Activated T-helper 2 cell treated with anti-CD3 and anti-CD28 coated beads, Interferon-gamma antibody, Interleukin-2, Interleukin-4, amounts not matched to agents 10 μg/mL and 5 μg/mL and 100 μg/mL, durations not matched to agents 14 hours and 24 hours and 36 hours (primary cell): ENCODE measurements at regions of chr5 and their contacts with region 1.

Region 1: DNA sequence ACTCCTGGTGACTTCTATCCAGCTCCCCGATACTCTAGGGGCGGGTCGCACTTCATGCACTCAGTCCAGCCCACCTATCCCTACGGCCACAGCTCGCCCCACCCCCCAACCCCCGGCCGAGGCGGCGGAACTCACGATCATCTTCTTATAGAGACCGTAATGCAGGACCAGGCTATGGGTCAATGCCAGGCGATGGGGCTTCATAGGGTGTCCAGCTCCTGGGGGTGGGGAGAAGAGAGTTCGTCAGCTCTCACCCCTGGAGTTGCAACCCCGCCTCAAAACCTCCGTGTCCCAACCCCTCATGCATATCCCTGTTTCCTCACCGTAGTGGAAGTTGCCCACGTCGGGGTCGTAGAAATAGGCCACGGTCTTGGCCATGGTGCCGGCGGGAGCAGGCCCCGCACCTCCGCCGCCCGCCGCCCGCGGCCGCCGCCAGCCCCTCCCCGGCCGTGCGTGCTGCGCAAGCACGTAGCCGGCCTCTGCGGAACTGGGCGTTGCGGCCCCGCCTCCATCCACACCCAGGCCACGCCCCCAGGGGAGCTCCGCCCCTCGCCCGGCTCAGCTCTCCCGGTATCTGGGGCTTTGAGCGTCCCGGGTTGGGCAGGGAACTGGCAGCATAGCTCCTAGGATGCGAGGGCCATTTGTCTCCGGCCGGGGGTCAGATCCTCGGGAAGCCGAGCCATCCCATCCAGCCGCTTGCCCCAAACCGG is at the starts of genes HDAC3 and RELL2:
- DNase-seq: peak; percentile 93
- H3K4me3 Mint-ChIP-seq: peak within 1 kb of the TSS; percentile 88
- H3K27ac Mint-ChIP-seq: peak within 1 kb of the TSS; percentile 81
- H3K4me1 Mint-ChIP-seq: peaks cover 37% of the 10 kb centered on the region
- H3K27me3 Mint-ChIP-seq: no peaks in the 10 kb centered on the region
- total RNA-seq, gene HDAC3: 92.4 and 95.2 TPM in 2 replicates
- total RNA-seq, gene RELL2: 15.9 and 16.1 TPM in 2 replicates

Region 2: GRCh38 chr5:141597394-141597793 is 39.2 kb before region 1 on chr5:
- intact Hi-C with region 1: loop called (anchors 1 kb)
- DNase-seq: no peak
- H3K4me3 Mint-ChIP-seq: no peak overlapping the region
- H3K27ac Mint-ChIP-seq: no peak overlapping the region
- H3K4me1 Mint-ChIP-seq: peaks cover 54% of the 10 kb centered on the region
- H3K27me3 Mint-ChIP-seq: no peaks in the 10 kb centered on the region

Region 3: DNA sequence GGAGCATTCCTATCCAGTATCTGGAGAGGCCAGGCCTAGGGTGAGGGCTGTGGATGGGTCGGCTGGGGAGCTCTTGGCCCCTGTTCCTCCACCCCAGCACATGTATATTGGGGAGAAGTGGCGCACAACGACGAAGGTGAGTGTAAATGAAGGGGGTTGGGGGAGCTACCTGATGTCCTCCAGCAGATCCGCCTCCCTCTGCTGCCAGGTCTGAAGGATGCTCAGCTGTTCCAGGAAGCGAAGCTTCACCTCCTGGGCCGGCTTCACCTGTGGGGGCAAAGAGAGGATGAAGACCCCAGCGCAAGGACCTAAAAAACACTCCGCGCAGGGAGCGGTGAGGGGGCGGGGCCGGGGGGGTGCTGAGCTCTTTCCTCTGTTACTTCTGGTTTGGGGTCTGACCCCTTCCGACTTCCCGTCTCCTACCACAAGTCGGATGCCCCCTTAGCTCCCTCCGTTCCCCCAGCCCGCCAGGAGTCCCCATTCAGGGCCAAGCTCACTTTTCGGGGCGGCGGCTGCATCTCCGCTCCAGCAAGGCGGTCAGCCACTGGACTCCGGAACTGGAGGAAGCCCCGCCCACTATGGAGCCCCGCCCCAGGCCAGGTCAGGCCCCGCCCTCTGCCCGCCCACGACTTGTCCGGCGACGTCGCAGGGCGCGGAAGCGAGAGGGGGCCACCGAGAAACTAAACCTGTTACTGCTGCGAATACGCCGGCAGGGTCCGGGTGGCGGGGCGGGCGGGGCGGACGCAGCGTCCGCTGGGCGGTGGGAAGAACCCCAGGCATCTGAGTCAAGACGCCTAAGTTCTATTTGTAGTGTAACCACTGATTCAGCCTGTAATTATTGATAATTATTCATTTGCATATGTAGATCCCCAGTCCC is 14.5 kb after region 1 on chr5 and contains the start of gene FCHSD1:
- intact Hi-C with region 1: loop called (anchors 1 kb)
- DNase-seq: peak; percentile 76
- H3K4me3 Mint-ChIP-seq: peak within 1 kb of the TSS; percentile 98
- H3K27ac Mint-ChIP-seq: peak within 1 kb of the TSS; percentile 94
- H3K4me1 Mint-ChIP-seq: peaks cover 11% of the 10 kb centered on the region
- H3K27me3 Mint-ChIP-seq: no peaks in the 10 kb centered on the region
- total RNA-seq, gene FCHSD1: 37.4 and 42.8 TPM in 2 replicates

Region 4: GRCh38 chr5:141681695-141682641 is 45.4 kb after region 1 on chr5 and contains the start of gene ARAP3:
- intact Hi-C with region 1: no loop called
- DNase-seq: no peak
- H3K4me3 Mint-ChIP-seq: peak within 1 kb of the TSS; percentile 78
- H3K27ac Mint-ChIP-seq: peak within 1 kb of the TSS; percentile 63
- H3K4me1 Mint-ChIP-seq: peaks cover 18% of the 10 kb centered on the region
- H3K27me3 Mint-ChIP-seq: no peaks in the 10 kb centered on the region
- total RNA-seq, gene ARAP3: 9.9 and 10.5 TPM in 2 replicates